ENCODE measurements at regions of chr1 and their contacts with region 1.

Region 1: GRCh38 chr1:158998781-158999161 is 10.9 kb upstream of the IFI16 start:
- DNase-seq: peak; percentile 18
- H3K4me3 ChIP-seq: peak overlapping the region; percentile 69
- H3K27ac ChIP-seq: no peak overlapping the region
- H3K27me3 ChIP-seq: no peaks in the 10 kb centered on the region
- CTCF ChIP-seq: peak; percentile 89

Region 2: DNA sequence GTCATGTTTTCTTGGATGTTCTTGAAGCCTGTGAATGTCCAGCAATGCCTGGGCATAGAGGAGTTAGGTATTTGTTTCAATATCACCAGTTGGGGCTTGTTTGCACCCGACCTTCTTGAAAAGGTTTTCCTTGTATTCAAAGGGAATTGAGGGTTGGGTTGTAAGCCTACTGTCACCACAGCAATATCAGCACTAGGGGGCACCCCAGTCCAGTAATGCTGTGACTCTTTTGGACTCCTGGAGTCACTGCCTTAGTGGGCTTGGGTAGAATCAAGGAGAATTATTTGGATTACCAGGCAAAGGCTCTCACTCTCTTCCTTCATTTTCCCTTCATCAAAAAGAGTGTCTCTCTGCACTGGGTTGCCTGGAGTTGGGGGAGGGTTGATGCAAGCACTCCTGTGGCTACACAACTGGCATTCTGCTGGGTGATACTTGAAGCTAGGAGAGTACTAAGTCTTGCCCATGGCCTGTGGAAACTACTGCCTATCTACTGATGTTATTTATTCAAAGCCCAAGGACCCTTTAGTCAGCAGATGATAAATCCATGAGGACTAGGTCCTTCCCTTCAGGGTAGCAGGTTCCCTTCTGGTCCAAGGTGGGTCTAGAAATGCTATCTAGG is 492.3 kb before region 1 on chr1:
- CTCF ChIA-PET with region 1: interaction called, 12 read pairs
- POLR2A ChIA-PET with region 1: no interaction called
- DNase-seq: no peak
- H3K4me3 ChIP-seq: no peak overlapping the region
- H3K27ac ChIP-seq: no peak overlapping the region
- H3K27me3 ChIP-seq: no peaks in the 10 kb centered on the region
- CTCF ChIP-seq: peak; percentile 46

Region 3: DNA sequence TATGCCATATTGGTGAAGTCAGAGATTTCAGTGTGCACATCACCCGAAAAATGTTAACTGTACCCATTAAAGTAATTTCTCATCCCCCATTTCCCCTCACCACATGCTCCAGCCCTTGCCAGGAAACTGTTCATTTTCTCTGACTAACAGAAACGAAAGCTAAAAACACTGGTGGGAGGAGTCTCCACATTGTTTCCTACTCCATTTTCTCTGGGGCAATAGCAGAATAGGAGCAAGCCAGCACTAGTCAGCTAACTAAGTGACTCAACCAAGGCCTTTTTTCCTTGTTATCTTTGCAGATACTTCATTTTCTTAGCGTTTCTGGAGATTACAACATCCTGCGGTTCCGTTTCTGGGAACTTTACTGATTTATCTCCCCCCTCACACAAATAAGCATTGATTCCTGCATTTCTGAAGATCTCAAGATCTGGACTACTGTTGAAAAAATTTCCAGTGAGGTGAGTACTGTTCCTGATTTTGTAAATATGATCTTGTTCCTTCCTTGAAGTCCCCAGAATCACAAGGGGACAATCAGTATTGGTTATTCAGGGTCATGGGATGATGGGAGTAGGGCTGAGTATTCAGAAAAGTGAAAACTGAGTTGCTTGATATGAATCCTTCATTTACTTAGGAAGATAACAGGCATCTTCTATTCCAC is 11.1 kb after region 1 on chr1 and contains the start of gene IFI16:
- CTCF ChIA-PET with region 1: interaction called, 15 read pairs
- POLR2A ChIA-PET with region 1: interaction called, 12 read pairs
- DNase-seq: peak; percentile 83
- H3K4me3 ChIP-seq: peak within 1 kb of the TSS; percentile 76
- H3K27ac ChIP-seq: peak within 1 kb of the TSS; percentile 79
- H3K27me3 ChIP-seq: no peaks in the 10 kb centered on the region
- CTCF ChIP-seq: no peak
- polyA plus RNA-seq, gene IFI16: 134 and 179 TPM in 2 replicates